GM12878 (cell line): ENCODE measurements at regions of chr1 and their contacts with region 1.

Region 1: DNA sequence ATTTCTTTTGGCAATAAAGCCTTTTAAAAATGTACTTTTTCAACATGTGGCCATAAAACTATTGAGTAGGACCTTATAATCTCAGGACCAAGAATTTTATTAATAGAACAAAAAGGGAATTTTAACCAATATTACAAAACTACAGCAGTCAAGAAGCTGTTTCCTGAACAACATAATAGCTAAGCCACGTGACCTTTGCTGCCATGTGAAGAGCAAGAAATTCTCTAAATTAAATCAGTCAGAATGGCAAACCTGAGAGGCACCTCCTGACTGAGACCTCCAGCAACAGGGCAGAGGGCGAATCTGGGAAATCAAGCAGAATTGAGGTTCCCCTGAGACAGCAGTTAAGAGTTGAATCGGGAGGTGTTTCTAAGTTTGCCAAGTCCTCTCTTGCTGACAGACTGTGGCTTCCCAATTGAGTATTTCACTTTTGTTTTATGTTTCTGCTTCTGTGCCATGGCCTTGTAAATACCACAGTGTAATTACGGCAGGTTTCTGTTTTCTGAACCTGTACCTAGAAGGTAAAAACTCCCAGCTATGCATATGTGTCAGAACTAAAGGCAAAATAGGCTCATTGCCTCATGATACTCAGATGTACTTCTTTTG is 358.4 kb downstream of the NTNG1 start:
- DNase-seq: peak; percentile 76
- ATAC-seq: peak; percentile 97
- H3K4me3 ChIP-seq: no peak overlapping the region
- H3K27ac ChIP-seq: peak overlapping the region; percentile 57
- H3K4me1 ChIP-seq: peaks cover 13% of the 10 kb centered on the region
- H3K27me3 ChIP-seq: no peaks in the 10 kb centered on the region
- CTCF ChIP-seq: no peak
- EP300 ChIP-seq: peak; percentile 64 to 69; a peak in 2 of 4 replicates
- POLR2A ChIP-seq: no peak
- RAD21 ChIP-seq: no peak

Region 2: GRCh38 chr1:107450899-107451664 is 48.2 kb before region 1 on chr1:
- CTCF ChIA-PET with region 1: interaction called, 4 read pairs
- POLR2A ChIA-PET with region 1: interaction called, 3 read pairs
- RAD21 ChIA-PET with region 1: interaction called, 8 read pairs
- SMC1A ChIA-PET with region 1: interaction called, 11 read pairs
- in situ Hi-C with region 1: no loop called
- intact Hi-C with region 1: no loop called
- DNase-seq: peak; percentile 72
- ATAC-seq: peak; percentile 93
- H3K4me3 ChIP-seq: peak overlapping the region; percentile 45; the same call in 1 of the 2 replicates
- H3K27ac ChIP-seq: peak overlapping the region; percentile 96
- H3K4me1 ChIP-seq: peaks cover 29% of the 10 kb centered on the region
- H3K27me3 ChIP-seq: no peaks in the 10 kb centered on the region
- CTCF ChIP-seq: no peak
- EP300 ChIP-seq: peak; percentile 80 to 91; a peak in 3 of 4 replicates
- POLR2A ChIP-seq: peak; percentile 59
- RAD21 ChIP-seq: no peak

Region 3: GRCh38 chr1:107460035-107460434 is 39.2 kb before region 1 on chr1:
- CTCF ChIA-PET with region 1: interaction called, 3 read pairs
- POLR2A ChIA-PET with region 1: interaction called, 3 read pairs
- RAD21 ChIA-PET with region 1: interaction called, 4 read pairs
- SMC1A ChIA-PET with region 1: interaction called, 12 read pairs
- in situ Hi-C with region 1: no loop called
- intact Hi-C with region 1: no loop called
- DNase-seq: peak; percentile 40
- ATAC-seq: peak; percentile 88
- H3K4me3 ChIP-seq: no peak overlapping the region
- H3K27ac ChIP-seq: no peak overlapping the region
- H3K4me1 ChIP-seq: peaks cover 10% of the 10 kb centered on the region
- H3K27me3 ChIP-seq: no peaks in the 10 kb centered on the region
- CTCF ChIP-seq: no peak
- EP300 ChIP-seq: no peak
- POLR2A ChIP-seq: no peak
- RAD21 ChIP-seq: no peak